ENCODE measurements at regions of chr11 and their contacts with region 1.

Region 1: GRCh38 chr11:134196756-134197155 is 27.0 kb downstream of the NCAPD3 start:
- DNase-seq: no peak
- ATAC-seq: no peak
- H3K4me3 Mint-ChIP-seq: no peak overlapping the region
- H3K27ac Mint-ChIP-seq: peak overlapping the region; percentile 14
- H3K4me1 Mint-ChIP-seq: peaks cover 5% of the 10 kb centered on the region
- H3K27me3 Mint-ChIP-seq: no peaks in the 10 kb centered on the region

Region 2: DNA sequence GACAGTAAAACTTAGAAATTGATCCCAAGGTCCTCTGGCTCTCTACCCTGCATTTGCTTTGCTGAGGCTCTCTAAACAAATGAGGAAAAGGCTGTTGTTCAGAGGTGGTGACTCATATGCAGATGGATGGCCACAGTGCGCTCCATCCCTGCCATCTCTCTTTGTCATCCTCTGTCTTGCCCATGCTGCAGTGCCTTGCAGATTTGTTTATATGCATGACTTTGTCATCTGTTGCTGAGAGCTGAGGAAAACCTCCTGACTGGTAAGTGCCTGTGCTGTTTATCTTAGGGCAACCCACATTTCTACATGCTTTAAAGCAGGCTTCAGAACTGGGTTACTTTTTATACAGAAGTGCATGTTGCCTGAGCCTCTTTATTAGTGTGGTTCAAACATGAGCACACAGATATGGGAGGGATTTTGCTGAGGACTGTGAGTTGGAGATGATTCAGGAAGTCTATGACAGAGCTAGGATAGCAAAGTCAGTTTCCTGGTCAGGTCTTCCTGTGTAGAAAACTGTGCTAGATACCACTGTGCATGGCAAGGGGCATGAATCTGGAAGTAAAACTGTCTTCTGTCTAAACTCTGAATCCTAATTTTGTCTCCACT is 70.4 kb before region 1 on chr11:
- CTCF ChIA-PET with region 1: no interaction called
- POLR2A ChIA-PET with region 1: no interaction called
- intact Hi-C with region 1: no loop called
- DNase-seq: peak; percentile 33
- ATAC-seq: peak; percentile 87
- H3K4me3 Mint-ChIP-seq: no peak overlapping the region
- H3K27ac Mint-ChIP-seq: no peak overlapping the region
- H3K4me1 Mint-ChIP-seq: peaks cover 19% of the 10 kb centered on the region
- H3K27me3 Mint-ChIP-seq: peaks cover 23% of the 10 kb centered on the region

Region 3: DNA sequence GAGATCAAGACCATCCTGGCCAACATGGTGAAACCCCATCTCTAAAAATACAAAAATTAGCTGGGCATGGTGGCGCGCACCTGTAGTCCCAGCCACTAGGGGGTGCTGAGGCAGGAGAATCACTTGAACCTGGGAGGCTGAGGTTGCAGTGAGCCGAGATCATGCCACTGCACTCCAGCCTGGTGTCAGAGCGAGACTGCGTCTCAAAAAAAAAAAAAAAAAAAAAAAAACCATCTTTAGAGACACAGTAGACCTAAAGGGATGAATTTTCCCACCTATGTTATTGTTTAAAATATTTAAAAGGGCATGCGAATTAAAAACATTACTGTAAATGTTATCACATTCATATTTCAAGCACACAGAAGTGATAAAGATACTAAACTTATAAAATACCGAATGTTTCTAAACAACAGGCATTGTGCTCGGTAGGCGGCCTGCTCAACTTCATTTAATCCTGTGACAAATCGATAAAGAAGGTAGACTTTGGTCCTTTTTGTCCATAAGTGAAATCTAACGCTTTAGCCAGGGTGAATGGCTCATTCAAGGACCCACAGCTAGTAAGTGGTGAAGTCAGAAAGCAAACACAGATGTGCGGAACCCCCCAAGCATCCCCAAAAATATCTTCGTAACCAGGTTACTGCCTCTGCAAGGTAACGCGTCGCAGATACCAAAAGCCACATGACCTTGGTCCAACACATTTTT is 10.9 kb after region 1 on chr11:
- CTCF ChIA-PET with region 1: interaction called, 28 read pairs
- POLR2A ChIA-PET with region 1: no interaction called
- intact Hi-C with region 1: no loop called
- DNase-seq: peak; percentile 81
- ATAC-seq: peak; percentile 33
- H3K4me3 Mint-ChIP-seq: no peak overlapping the region
- H3K27ac Mint-ChIP-seq: no peak overlapping the region
- H3K4me1 Mint-ChIP-seq: peaks cover 5% of the 10 kb centered on the region
- H3K27me3 Mint-ChIP-seq: no peaks in the 10 kb centered on the region